B cell (primary cell): ENCODE measurements at regions of chr1 and their contacts with region 1.

Region 1: GRCh38 chr1:48093696-48094528 is 96.7 kb upstream of the TRABD2B start:
- DNase-seq: peak; percentile 71
- ATAC-seq: peak; percentile 65
- H3K4me3 ChIP-seq: peak overlapping the region in 3 of 5 experiments; percentile 6 to 16 (median 7)
- H3K4me3 Mint-ChIP-seq: peak overlapping the region; percentile 61
- H3K27ac ChIP-seq: no peak overlapping the region
- H3K27ac Mint-ChIP-seq: no peak overlapping the region
- H3K4me1 ChIP-seq: peaks cover 5 to 6% of the 10 kb centered on the region in 2 donors
- H3K4me1 Mint-ChIP-seq: peaks cover 6% of the 10 kb centered on the region
- H3K27me3 ChIP-seq: peaks cover 0 to 21% (median 7%) of the 10 kb centered on the region in 4 experiments
- H3K27me3 Mint-ChIP-seq: peaks cover 46% of the 10 kb centered on the region
- CTCF ChIP-seq: peak; percentile 91

Region 2: GRCh38 chr1:48073798-48074530 is 19.9 kb before region 1 on chr1:
- CTCF ChIA-PET with region 1: no interaction called
- POLR2A ChIA-PET with region 1: no interaction called
- intact Hi-C with region 1: no loop called
- DNase-seq: no peak
- ATAC-seq: no peak
- H3K4me3 ChIP-seq: no peak overlapping the region
- H3K4me3 Mint-ChIP-seq: no peak overlapping the region
- H3K27ac ChIP-seq: no peak overlapping the region
- H3K27ac Mint-ChIP-seq: no peak overlapping the region
- H3K4me1 ChIP-seq: no peaks in the 10 kb centered on the region
- H3K4me1 Mint-ChIP-seq: peaks cover 3% of the 10 kb centered on the region
- H3K27me3 ChIP-seq: peaks cover 0 to 3% (median 3%) of the 10 kb centered on the region in 4 experiments
- H3K27me3 Mint-ChIP-seq: peaks cover 24% of the 10 kb centered on the region
- CTCF ChIP-seq: no peak

Region 3: DNA sequence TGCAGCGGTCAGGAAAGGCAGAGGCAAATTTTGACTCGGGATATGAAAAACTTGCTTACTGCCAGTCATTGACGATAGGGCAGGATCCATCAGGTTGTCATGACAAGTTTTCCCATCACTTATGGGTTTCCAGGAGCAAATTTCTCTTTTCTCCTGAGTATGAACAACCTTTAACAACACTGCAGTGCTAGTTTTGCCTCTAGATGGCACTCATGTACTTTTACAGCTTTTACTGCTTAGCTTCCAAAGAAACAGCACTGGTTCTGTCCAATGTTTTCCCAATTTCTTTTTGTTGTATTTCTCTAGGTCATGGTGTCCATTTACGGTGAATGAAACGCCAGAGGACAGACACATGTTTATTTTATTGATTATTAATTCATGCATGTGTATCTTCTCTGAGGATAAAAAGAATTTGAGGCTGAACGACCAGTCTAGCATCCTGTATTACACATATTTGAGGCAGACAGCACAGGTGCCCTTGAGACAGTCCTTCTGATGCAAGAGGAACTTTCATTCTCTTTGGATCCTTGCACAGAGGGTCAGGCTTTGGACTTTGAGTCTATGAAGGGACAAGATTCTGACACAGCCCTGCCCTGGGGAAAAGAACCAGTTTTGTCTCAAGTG is 15.6 kb after region 1 on chr1:
- CTCF ChIA-PET with region 1: interaction called, 12 read pairs
- POLR2A ChIA-PET with region 1: no interaction called
- intact Hi-C with region 1: no loop called
- DNase-seq: peak; percentile 30
- ATAC-seq: no peak
- H3K4me3 ChIP-seq: no peak overlapping the region
- H3K4me3 Mint-ChIP-seq: no peak overlapping the region
- H3K27ac ChIP-seq: no peak overlapping the region
- H3K27ac Mint-ChIP-seq: no peak overlapping the region
- H3K4me1 ChIP-seq: no peaks in the 10 kb centered on the region
- H3K4me1 Mint-ChIP-seq: no peaks in the 10 kb centered on the region
- H3K27me3 ChIP-seq: peaks cover 0 to 5% (median under 1%) of the 10 kb centered on the region in 4 experiments
- H3K27me3 Mint-ChIP-seq: peaks cover 9% of the 10 kb centered on the region
- CTCF ChIP-seq: peak; percentile 73

Region 4: DNA sequence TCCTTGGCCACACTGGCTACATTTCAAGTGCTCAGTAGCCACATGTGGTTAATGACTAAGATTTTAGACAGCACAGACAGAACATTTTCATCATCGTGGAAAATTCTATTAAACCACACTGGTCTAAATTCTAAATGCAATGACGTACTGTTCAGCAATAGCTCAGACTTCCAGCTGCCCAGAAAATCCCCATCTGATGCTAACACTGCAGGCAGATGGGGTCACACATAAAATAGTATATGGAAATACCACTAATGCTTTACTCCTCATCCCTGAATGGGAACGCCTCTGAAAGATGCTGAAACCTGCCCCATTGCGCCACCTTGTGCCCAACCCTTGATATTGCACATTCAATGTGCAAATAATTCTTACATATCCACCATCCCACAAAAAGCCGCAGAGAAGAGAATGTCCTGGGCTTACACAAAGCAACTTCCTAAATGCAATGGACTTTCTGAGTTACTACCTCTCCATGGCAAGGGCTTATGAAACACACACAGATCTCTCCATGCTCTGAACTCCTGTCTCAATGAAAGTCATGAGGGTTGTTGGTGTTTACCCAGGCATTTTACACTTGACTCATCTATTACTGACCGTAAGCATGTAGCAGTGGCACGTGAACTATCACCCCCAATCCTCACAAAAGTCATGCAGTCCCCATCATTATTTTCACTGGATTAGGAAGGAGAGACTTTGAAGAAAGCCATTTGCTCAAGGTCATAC is 108.3 kb after region 1 on chr1:
- CTCF ChIA-PET with region 1: interaction called, 4 read pairs
- POLR2A ChIA-PET with region 1: no interaction called
- intact Hi-C with region 1: loop called (anchors 5 kb)
- DNase-seq: peak; percentile 57
- ATAC-seq: peak; percentile 21
- H3K4me3 ChIP-seq: no peak overlapping the region
- H3K4me3 Mint-ChIP-seq: no peak overlapping the region
- H3K27ac ChIP-seq: no peak overlapping the region
- H3K27ac Mint-ChIP-seq: no peak overlapping the region
- H3K4me1 ChIP-seq: no peaks in the 10 kb centered on the region
- H3K4me1 Mint-ChIP-seq: no peaks in the 10 kb centered on the region
- H3K27me3 ChIP-seq: peaks cover 0 to 3% (median 0%) of the 10 kb centered on the region in 4 experiments
- H3K27me3 Mint-ChIP-seq: peaks cover 15% of the 10 kb centered on the region
- CTCF ChIP-seq: peak; percentile 91

Region 5: GRCh38 chr1:48236716-48237470 is 143.0 kb after region 1 on chr1:
- CTCF ChIA-PET with region 1: interaction called, 19 read pairs
- POLR2A ChIA-PET with region 1: no interaction called
- intact Hi-C with region 1: no loop called
- DNase-seq: peak; percentile 50
- ATAC-seq: no peak
- H3K4me3 ChIP-seq: no peak overlapping the region
- H3K4me3 Mint-ChIP-seq: no peak overlapping the region
- H3K27ac ChIP-seq: no peak overlapping the region
- H3K27ac Mint-ChIP-seq: no peak overlapping the region
- H3K4me1 ChIP-seq: peaks cover 15% of the 10 kb centered on the region in 2 donors
- H3K4me1 Mint-ChIP-seq: peaks cover 14% of the 10 kb centered on the region
- H3K27me3 ChIP-seq: no peaks in the 10 kb centered on the region
- H3K27me3 Mint-ChIP-seq: no peaks in the 10 kb centered on the region
- CTCF ChIP-seq: peak; percentile 67

Region 6: GRCh38 chr1:48498096-48498791 is 404.3 kb after region 1 on chr1:
- CTCF ChIA-PET with region 1: interaction called, 10 read pairs
- POLR2A ChIA-PET with region 1: no interaction called
- intact Hi-C with region 1: no loop called
- DNase-seq: peak; percentile 68
- ATAC-seq: peak; percentile 62
- H3K4me3 ChIP-seq: no peak overlapping the region
- H3K4me3 Mint-ChIP-seq: no peak overlapping the region
- H3K27ac ChIP-seq: no peak overlapping the region
- H3K27ac Mint-ChIP-seq: no peak overlapping the region
- H3K4me1 ChIP-seq: peaks cover 0 to 5% of the 10 kb centered on the region in 2 donors
- H3K4me1 Mint-ChIP-seq: peaks cover 4% of the 10 kb centered on the region
- H3K27me3 ChIP-seq: no peaks in the 10 kb centered on the region
- H3K27me3 Mint-ChIP-seq: peaks cover 12% of the 10 kb centered on the region
- CTCF ChIP-seq: peak; percentile 93